Activated CD4-positive, alpha-beta T cell treated with anti-CD3 and anti-CD28 coated beads, Interleukin-2, amount 10 ng/mL, durations not matched to agents 24 days and 14 days (primary cell): ENCODE measurements at regions of chr2 and their contacts with region 1.

Region 1: DNA sequence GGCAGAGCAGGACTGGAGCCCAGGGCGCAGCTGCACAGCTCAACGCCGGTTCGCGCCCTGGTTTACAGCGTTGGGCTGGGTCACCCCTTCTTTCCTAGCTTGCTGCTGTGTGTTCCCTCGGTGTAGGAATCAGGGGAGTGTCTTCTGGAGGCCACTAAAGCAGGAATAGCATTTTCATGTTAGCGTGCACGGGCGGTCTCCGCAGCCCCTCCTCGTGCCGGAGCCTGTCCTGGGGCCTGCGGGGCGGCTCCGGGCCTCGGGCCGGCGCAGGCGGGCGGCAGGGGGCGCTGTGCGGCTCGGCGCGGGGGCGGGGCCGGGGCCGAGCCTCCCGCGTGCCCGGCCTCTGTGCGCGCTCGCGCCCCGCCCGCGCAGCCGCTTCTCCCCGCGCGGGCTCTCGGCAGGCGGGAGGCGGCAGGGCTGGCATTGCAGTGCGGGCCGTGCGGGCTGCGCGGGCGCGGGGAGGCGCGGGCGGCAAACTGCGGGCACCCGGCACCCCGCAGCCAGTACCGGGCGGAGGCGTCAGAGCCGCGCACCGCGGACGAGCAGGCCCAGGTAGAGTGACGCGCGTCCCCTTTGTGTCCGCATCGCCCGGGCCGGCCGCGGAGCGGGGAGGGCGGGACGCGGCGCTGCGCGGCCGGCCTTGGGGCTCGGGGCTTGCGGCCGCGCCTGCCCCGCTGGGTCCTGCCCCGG is at the start of gene RNF144A:
- DNase-seq: peak; percentile 94
- H3K4me3 Mint-ChIP-seq: peak within 1 kb of the TSS; percentile 80
- H3K27ac Mint-ChIP-seq: peak within 1 kb of the TSS; percentile 80
- H3K4me1 Mint-ChIP-seq: peaks cover 59% of the 10 kb centered on the region
- H3K27me3 Mint-ChIP-seq: peaks cover 3% of the 10 kb centered on the region
- total RNA-seq, gene RNF144A: 22.1 and 23.0 TPM in 2 replicates

Region 2: GRCh38 chr2:6877402-6878304 is 39.6 kb before region 1 on chr2 and contains the start of gene RSAD2:
- intact Hi-C with region 1: loop called (anchors 2 kb)
- DNase-seq: peak; percentile 88
- H3K4me3 Mint-ChIP-seq: peak within 1 kb of the TSS; percentile 90
- H3K27ac Mint-ChIP-seq: peak within 1 kb of the TSS; percentile 85
- H3K4me1 Mint-ChIP-seq: peaks cover 74% of the 10 kb centered on the region
- H3K27me3 Mint-ChIP-seq: no peaks in the 10 kb centered on the region
- total RNA-seq, gene RSAD2: 2.0 and 2.4 TPM in 2 replicates

Region 3: GRCh38 chr2:6883448-6884122 is 33.6 kb before region 1 on chr2:
- intact Hi-C with region 1: loop called (anchors 2 kb)
- DNase-seq: no peak
- H3K4me3 Mint-ChIP-seq: no peak overlapping the region
- H3K27ac Mint-ChIP-seq: no peak overlapping the region
- H3K4me1 Mint-ChIP-seq: peaks cover 48% of the 10 kb centered on the region
- H3K27me3 Mint-ChIP-seq: no peaks in the 10 kb centered on the region

Region 4: DNA sequence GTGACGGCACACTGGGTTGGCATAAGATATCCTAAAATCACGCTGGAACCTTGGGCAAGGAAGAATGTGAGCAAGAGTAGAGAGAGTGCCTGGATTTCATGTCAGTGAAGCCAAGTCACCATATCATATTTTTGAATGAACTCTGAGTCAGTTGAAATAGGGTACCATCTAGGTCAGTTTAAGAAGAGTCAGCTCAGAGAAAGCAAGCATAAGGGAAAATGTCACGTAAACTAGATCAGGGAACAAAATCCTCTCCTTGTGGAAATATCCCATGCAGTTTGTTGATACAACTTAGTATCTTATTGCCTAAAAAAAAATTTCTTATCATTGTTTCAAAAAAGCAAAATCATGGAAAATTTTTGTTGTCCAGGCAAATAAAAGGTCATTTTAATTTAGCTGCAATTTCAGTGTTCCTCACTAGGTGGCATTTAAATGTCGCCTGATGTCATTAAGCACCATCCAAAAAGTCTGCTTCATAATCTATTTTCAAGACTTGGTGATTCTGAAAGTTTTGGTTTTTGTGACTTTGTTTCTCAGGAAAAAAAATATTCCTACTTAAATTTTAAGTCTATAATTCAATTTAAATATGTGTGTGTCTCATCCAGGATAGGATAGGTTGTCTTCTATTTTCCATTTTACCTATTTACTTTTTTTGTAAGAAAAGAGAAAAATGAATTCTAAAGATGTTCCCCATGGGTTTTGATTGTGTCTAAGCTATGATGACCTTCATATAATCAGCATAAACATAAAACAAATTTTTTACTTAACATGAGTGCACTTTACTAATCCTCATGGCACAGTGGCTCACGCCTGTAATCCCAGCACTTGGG is 20.1 kb before region 1 on chr2:
- intact Hi-C with region 1: loop called (anchors 2 kb)
- DNase-seq: no peak
- H3K4me3 Mint-ChIP-seq: no peak overlapping the region
- H3K27ac Mint-ChIP-seq: peak overlapping the region; percentile 21
- H3K4me1 Mint-ChIP-seq: peaks cover 17% of the 10 kb centered on the region
- H3K27me3 Mint-ChIP-seq: no peaks in the 10 kb centered on the region

Region 5: GRCh38 chr2:7014174-7014640 is 97.0 kb after region 1 on chr2:
- intact Hi-C with region 1: loop called (anchors 5 kb)
- DNase-seq: peak; percentile 71
- H3K4me3 Mint-ChIP-seq: no peak overlapping the region
- H3K27ac Mint-ChIP-seq: peak overlapping the region; percentile 2
- H3K4me1 Mint-ChIP-seq: peaks cover 24% of the 10 kb centered on the region
- H3K27me3 Mint-ChIP-seq: no peaks in the 10 kb centered on the region

Region 6: DNA sequence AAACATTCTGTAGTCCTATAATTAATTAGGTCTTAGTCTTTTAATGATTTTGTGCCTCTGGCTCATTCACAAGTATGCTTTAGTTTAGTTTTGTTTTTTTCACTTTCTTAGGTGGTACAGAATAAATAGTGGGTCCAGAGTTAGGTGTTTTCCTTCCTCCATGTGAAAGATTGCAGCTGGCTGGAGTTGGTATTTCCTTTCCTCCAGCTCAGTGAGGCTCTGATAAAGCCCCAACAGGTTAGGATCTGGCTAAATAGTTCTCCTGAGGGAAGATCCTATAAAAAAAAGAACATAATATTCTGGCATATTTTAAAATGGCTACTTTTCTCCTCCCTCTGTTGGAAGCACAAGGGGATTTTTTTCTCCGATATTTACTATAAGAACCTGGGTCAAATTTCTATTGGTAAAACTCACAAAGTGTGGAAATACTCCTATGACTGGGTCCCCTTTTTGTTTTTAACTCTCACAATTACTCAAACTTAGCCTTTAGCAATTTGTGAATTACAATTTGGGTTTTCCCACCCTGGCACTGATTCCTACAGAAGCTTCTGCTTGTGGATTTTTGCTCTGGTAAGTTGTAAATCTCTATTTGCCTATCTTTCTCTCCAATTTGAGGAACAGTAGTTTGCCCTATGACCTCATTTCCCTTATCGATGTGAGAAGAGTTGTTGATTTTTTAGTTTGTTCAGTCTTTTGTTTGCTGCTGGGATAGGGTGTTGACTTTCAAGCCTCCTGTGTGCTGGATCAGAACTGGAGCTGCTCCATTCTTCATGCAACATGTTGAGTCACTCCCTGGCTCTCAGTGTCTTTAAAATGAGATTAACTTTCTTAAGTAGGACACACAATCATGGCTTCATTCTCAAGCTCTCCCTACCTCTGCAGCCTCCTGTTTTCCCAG is 500.9 kb after region 1 on chr2:
- intact Hi-C with region 1: no loop called
- DNase-seq: peak; percentile 37
- H3K4me3 Mint-ChIP-seq: no peak overlapping the region
- H3K27ac Mint-ChIP-seq: no peak overlapping the region
- H3K4me1 Mint-ChIP-seq: peaks cover 2% of the 10 kb centered on the region
- H3K27me3 Mint-ChIP-seq: peaks cover 18% of the 10 kb centered on the region